HAP-1 (cell line): ENCODE measurements at regions of chr11 and their contacts with region 1.

Region 1: DNA sequence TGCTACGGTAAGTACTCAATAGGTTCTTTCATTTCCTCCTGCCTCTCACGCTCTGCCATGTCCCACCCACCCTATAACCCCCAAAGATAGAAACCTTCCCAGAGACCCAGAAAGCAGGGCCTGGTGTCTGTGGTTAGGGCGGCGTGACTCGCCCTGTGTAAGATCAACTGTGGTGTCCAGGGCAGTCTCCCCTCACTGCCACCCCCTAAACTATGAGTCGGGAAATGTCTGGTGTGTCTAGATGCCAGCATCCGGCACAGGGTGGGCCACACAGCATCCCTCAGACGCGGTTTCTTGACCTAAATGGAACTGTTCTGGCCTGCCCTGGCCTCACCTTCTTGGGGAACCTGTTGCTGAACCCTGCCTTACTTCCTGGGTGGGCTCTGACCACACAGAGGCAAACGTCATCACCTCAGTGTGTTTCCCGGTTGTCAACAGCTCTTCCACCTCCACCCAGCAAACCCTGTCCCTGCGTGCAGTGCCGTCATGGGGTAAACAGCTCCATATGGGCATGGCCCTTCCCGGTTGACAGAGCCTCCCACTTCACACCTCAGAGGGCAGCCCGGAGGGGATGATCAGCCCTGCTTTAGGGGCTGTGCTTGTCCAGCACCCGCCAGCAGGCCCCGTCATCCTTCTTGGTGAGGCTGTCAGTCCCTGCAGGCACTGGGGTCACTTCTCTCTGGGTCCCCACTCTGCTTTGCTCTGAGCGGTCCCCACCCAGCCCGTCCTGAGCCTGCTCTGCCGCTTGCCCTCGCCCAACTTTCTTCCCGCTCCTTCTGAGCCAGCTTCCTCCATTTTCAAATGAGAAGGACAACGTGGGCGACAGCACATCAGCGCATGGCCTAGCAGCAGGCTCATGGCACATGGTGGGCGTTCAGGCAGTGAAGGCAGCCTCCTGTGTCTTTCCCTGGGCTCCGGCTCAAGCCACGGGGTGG is 6.0 kb downstream of the WNT11 start:
- DNase-seq: no peak
- H3K4me3 ChIP-seq: no peak overlapping the region
- H3K4me1 ChIP-seq: no peaks in the 10 kb centered on the region
- H3K27me3 ChIP-seq: no peaks in the 10 kb centered on the region

Region 2: DNA sequence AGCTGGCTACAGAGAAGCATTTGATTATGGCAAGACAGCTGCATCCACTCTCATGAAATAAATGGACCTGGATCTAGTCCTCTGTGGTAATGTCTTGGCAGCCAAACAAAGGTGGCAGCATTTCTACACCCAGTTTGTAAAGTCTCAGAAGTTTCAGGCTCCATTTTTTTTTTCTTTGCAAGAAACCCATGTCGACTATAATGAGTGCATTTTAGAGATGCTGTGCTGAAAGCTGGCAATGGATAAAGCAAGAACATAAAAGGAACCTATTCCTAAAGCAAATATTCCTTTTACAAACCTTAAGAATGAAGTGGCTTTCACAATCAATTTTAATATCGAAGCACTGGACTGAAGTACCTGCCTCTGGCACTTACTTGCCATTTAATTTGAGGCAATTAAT is 147.2 kb after region 1 on chr11:
- in situ Hi-C with region 1: no loop called
- DNase-seq: no peak
- H3K4me3 ChIP-seq: no peak overlapping the region
- H3K4me1 ChIP-seq: no peaks in the 10 kb centered on the region
- H3K27me3 ChIP-seq: no peaks in the 10 kb centered on the region

Region 3: GRCh38 chr11:76680518-76681425 is 480.5 kb after region 1 on chr11:
- in situ Hi-C with region 1: loop called (anchors 5 kb)
- DNase-seq: peak; percentile 63 to 92
- H3K4me3 ChIP-seq: no peak overlapping the region
- H3K4me1 ChIP-seq: no peaks in the 10 kb centered on the region
- H3K27me3 ChIP-seq: no peaks in the 10 kb centered on the region; the same call in 1 of the 2 replicates